ENCODE measurements at regions of chr2 and their contacts with region 1.

Region 1: DNA sequence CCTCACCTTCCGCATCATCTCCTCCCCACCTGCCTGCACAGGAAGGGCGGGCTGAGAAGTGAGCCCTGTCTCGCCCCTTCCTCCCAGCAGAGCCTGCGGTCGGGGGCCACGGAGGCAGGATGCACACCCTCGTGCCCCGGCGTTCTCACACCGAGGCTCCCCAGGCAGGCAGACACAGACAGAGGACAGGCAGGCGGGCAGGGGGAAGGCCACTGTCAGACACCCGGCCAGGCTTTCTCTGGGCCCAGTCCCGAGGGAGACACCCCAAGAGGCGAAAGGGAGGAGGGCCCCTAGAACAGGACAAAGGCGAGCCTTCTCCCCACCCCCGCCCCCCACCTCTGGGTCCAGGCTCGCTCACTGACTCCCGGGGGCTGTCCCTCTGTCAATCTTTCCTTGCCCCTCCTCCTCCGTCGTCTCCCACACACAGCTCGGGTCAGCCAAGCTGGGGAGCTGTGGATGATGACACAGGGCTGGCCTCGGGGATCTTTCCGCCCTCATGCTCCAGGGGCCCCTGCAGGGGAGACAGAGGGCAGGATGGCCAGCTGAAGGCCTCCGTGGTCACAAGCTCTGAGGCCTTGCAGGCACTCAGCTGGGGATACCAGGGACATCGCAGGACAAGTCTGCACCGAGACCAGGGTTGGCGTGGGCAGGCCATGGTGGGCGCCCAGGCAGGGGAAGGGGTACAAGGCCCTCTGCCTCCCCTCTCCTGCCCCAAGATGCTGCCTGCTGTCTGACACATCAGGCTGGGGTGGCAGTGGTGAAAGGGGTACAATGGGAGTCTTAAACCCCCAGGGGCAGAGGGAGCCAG is 24.9 kb downstream of the BIN1 start:
- DNase-seq: no peak
- H3K4me3 ChIP-seq: no peak overlapping the region
- H3K27ac ChIP-seq: no peak overlapping the region
- H3K4me1 ChIP-seq: peaks cover 35% of the 10 kb centered on the region
- H3K27me3 ChIP-seq: no peaks in the 10 kb centered on the region
- CTCF ChIP-seq: no peak

Region 2: GRCh38 chr2:127153691-127154158 is 71.7 kb after region 1 on chr2:
- CTCF ChIA-PET with region 1: no interaction called
- POLR2A ChIA-PET with region 1: no interaction called
- intact Hi-C with region 1: loop called (anchors 5 kb)
- DNase-seq: peak; percentile 80 to 95
- H3K4me3 ChIP-seq: no peak overlapping the region
- H3K27ac ChIP-seq: peak overlapping the region; percentile 80
- H3K4me1 ChIP-seq: peaks cover 61% of the 10 kb centered on the region
- H3K27me3 ChIP-seq: no peaks in the 10 kb centered on the region
- CTCF ChIP-seq: no peak; the same call in 1 of the 2 replicates